Psoas muscle (tissue), 8 donors: ENCODE measurements at regions of chr18 and their contacts with region 1.

Region 1: GRCh38 chr18:74342416-74343043 is 26.9 kb downstream of the C18orf63 start:
- DNase-seq: no peak
- ATAC-seq: no peak
- H3K4me3 ChIP-seq: no peak overlapping the region
- H3K27ac ChIP-seq: no peak overlapping the region
- H3K4me1 ChIP-seq: no peaks in the 10 kb centered on the region
- H3K27me3 ChIP-seq: peaks cover 0 to 4% (median 3%) of the 10 kb centered on the region in 3 donors
- CTCF ChIP-seq: peak; percentile 69

Region 2: GRCh38 chr18:74196220-74197119 is 146.1 kb before region 1 on chr18:
- intact Hi-C with region 1: loop called (anchors 1 to 2 kb)
- DNase-seq: no peak
- ATAC-seq: peak; percentile 47 to 80 (median 58)
- H3K4me3 ChIP-seq: no peak overlapping the region
- H3K27ac ChIP-seq: no peak overlapping the region
- H3K4me1 ChIP-seq: no peaks in the 10 kb centered on the region
- H3K27me3 ChIP-seq: peaks cover 0 to 4% (median 0%) of the 10 kb centered on the region in 3 donors
- CTCF ChIP-seq: peak; percentile 94

Region 3: GRCh38 chr18:74546751-74547550 is 204.4 kb after region 1 on chr18:
- intact Hi-C with region 1: loop called in 1 of 2 experiments (anchors 10 kb)
- DNase-seq: peak; percentile 37 to 62
- ATAC-seq: peak in 3 of 4 donors; percentile 30 to 51 (median 33)
- H3K4me3 ChIP-seq: no peak overlapping the region
- H3K27ac ChIP-seq: peak overlapping the region; percentile 41
- H3K4me1 ChIP-seq: no peaks in the 10 kb centered on the region
- H3K27me3 ChIP-seq: no peaks in the 10 kb centered on the region
- CTCF ChIP-seq: no peak